MCF 10A (cell line): ENCODE measurements at regions of chr12 and their contacts with region 1.

Region 1: DNA sequence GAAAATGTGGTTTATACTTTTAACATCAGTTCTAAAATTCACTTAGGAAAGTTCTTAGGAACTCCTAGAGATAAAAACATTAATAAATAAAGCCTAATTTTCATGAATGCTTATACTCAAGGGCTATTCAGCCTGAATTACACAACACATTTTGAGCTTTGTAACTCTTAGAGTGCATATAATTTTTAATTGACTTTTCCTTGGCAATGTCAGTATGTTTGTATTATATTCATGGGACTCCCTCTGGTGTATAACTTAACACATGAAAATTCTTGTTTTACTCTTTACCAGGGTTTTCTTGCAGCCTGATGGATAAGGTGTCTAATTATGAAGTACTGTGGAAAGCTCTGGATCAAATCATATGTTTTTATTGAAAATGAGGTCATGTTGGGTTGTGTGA is 150.6 kb upstream of the HMGA2 start:
- DNase-seq: peak; percentile 60
- H3K4me3 Mint-ChIP-seq: no peak overlapping the region
- H3K27ac Mint-ChIP-seq: peak overlapping the region; percentile 88
- H3K4me1 Mint-ChIP-seq: peaks cover 29% of the 10 kb centered on the region
- H3K27me3 Mint-ChIP-seq: no peaks in the 10 kb centered on the region
- CTCF ChIP-seq: peak; percentile 25

Region 2: GRCh38 chr12:64890873-64891468 is 782.8 kb before region 1 on chr12:
- CTCF ChIA-PET with region 1: interaction called, 4 read pairs
- POLR2A ChIA-PET with region 1: no interaction called
- intact Hi-C with region 1: loop called (anchors 5 kb)
- DNase-seq: peak; percentile 71
- H3K4me3 Mint-ChIP-seq: no peak overlapping the region
- H3K27ac Mint-ChIP-seq: no peak overlapping the region
- H3K4me1 Mint-ChIP-seq: peaks cover 6% of the 10 kb centered on the region
- H3K27me3 Mint-ChIP-seq: peaks cover 15% of the 10 kb centered on the region
- CTCF ChIP-seq: peak; percentile 58

Region 3: GRCh38 chr12:65477721-65478120 is 196.0 kb before region 1 on chr12:
- CTCF ChIA-PET with region 1: no interaction called
- POLR2A ChIA-PET with region 1: no interaction called
- intact Hi-C with region 1: loop called (anchors 5 kb)
- DNase-seq: no peak
- H3K4me3 Mint-ChIP-seq: no peak overlapping the region
- H3K27ac Mint-ChIP-seq: no peak overlapping the region
- H3K4me1 Mint-ChIP-seq: no peaks in the 10 kb centered on the region
- H3K27me3 Mint-ChIP-seq: no peaks in the 10 kb centered on the region
- CTCF ChIP-seq: no peak

Region 4: GRCh38 chr12:65609359-65609771 is 64.4 kb before region 1 on chr12:
- CTCF ChIA-PET with region 1: interaction called, 76 read pairs
- POLR2A ChIA-PET with region 1: interaction called, 23 read pairs
- intact Hi-C with region 1: no loop called
- DNase-seq: peak; percentile 82
- H3K4me3 Mint-ChIP-seq: no peak overlapping the region
- H3K27ac Mint-ChIP-seq: peak overlapping the region; percentile 68
- H3K4me1 Mint-ChIP-seq: peaks cover 32% of the 10 kb centered on the region
- H3K27me3 Mint-ChIP-seq: no peaks in the 10 kb centered on the region
- CTCF ChIP-seq: no peak

Region 5: DNA sequence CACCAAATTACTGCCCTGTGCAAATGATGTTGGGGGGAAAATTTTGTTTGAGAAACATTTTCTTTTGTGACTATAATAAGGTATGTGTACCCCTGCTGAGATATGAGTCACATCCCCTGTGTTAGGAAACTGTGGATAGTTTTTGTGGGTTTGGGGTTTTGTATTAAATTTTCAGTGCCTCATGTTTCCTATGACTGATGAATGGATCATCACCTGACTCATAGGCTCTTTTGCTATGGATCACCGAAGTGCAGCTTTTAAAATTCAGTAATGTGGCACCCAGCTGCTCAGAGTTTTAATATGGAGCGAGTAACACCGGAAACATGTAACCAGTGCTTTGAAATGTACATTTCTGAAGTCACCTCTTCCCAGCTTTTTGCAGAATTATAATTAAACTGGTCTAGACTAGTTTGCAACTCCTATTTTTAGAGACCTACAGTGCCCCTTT is 16.8 kb before region 1 on chr12:
- CTCF ChIA-PET with region 1: interaction called, 4 read pairs
- POLR2A ChIA-PET with region 1: interaction called, 19 read pairs
- intact Hi-C with region 1: no loop called
- DNase-seq: peak; percentile 96
- H3K4me3 Mint-ChIP-seq: no peak overlapping the region
- H3K27ac Mint-ChIP-seq: peak overlapping the region; percentile 94
- H3K4me1 Mint-ChIP-seq: peaks cover 61% of the 10 kb centered on the region
- H3K27me3 Mint-ChIP-seq: no peaks in the 10 kb centered on the region
- CTCF ChIP-seq: no peak

Region 6: DNA sequence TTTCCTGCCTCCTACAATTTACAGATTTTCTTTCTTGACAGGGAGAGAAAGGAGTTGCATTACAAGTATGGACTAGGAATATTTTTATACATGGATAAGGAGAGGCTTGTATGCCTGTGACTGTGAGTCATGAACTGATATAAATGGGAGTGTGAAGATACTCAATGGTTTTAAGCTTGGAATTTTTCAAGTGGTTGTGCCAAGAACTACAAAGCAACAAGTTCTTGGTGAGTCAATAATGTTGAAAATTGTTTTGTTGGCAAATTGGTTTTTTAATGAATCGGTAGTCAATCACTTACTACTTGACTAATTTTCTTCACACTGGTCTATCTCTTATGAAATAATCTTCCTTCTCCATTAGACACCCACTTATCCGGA is 91.7 kb after region 1 on chr12:
- CTCF ChIA-PET with region 1: no interaction called
- POLR2A ChIA-PET with region 1: no interaction called
- intact Hi-C with region 1: no loop called
- DNase-seq: peak; percentile 78
- H3K4me3 Mint-ChIP-seq: peak overlapping the region; percentile 52
- H3K27ac Mint-ChIP-seq: peak overlapping the region; percentile 67
- H3K4me1 Mint-ChIP-seq: peaks cover 30% of the 10 kb centered on the region
- H3K27me3 Mint-ChIP-seq: no peaks in the 10 kb centered on the region
- CTCF ChIP-seq: no peak

Region 7: GRCh38 chr12:65881965-65882413 is 208.3 kb after region 1 on chr12:
- CTCF ChIA-PET with region 1: interaction called, 3 read pairs
- POLR2A ChIA-PET with region 1: no interaction called
- intact Hi-C with region 1: loop called (anchors 1 kb)
- DNase-seq: no peak
- H3K4me3 Mint-ChIP-seq: no peak overlapping the region
- H3K27ac Mint-ChIP-seq: peak overlapping the region; percentile 80
- H3K4me1 Mint-ChIP-seq: peaks cover 55% of the 10 kb centered on the region
- H3K27me3 Mint-ChIP-seq: no peaks in the 10 kb centered on the region
- CTCF ChIP-seq: no peak

Region 8: DNA sequence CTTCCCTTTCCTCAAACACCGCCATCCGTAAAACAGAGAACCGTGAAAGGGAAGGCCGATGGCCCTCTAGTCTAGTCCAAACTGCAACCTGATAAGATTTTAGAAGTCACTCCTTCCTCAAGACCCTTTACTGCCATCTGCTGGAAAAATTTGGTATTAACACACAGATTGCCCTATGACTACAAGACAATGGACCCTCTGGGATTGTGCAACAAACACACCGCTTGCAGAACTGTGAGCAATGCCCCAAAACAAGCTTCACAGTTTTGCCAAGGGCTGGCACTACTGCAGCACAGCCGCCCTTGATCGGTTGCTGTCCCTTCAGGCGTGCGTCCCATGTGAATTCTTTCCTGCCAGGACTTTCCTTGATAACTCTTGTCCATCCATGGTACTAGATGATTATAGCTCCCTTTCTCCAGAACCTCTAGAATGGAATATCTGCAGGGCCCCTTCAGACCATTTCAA is 433.8 kb after region 1 on chr12:
- CTCF ChIA-PET with region 1: no interaction called
- POLR2A ChIA-PET with region 1: no interaction called
- intact Hi-C with region 1: loop called (anchors 5 kb)
- DNase-seq: peak; percentile 98
- H3K4me3 Mint-ChIP-seq: no peak overlapping the region
- H3K27ac Mint-ChIP-seq: no peak overlapping the region
- H3K4me1 Mint-ChIP-seq: peaks cover 16% of the 10 kb centered on the region
- H3K27me3 Mint-ChIP-seq: no peaks in the 10 kb centered on the region
- CTCF ChIP-seq: peak; percentile 62